Esophagus muscularis mucosa (tissue), 4 donors: ENCODE measurements at regions of chr4 and their contacts with region 1.

Region 1: GRCh38 chr4:107930821-107931774 is at the start of gene CYP2U1:
- DNase-seq: peak; percentile 94
- H3K4me3 ChIP-seq: peak within 1 kb of the TSS; percentile 77 to 93 (median 83)
- H3K27ac ChIP-seq: peak within 1 kb of the TSS; percentile 79 to 90 (median 88)
- H3K4me1 ChIP-seq: peaks cover 11 to 38% (median 31%) of the 10 kb centered on the region in 4 donors
- H3K27me3 ChIP-seq: no peaks in the 10 kb centered on the region
- CTCF ChIP-seq: peak in 2 of 3 experiments; percentile 23 to 44
- EP300 ChIP-seq: no peak
- POLR2A ChIP-seq: peak; percentile 24
- total RNA-seq, gene CYP2U1: 17.7 to 36.6 (median 22.9) TPM

Region 2: DNA sequence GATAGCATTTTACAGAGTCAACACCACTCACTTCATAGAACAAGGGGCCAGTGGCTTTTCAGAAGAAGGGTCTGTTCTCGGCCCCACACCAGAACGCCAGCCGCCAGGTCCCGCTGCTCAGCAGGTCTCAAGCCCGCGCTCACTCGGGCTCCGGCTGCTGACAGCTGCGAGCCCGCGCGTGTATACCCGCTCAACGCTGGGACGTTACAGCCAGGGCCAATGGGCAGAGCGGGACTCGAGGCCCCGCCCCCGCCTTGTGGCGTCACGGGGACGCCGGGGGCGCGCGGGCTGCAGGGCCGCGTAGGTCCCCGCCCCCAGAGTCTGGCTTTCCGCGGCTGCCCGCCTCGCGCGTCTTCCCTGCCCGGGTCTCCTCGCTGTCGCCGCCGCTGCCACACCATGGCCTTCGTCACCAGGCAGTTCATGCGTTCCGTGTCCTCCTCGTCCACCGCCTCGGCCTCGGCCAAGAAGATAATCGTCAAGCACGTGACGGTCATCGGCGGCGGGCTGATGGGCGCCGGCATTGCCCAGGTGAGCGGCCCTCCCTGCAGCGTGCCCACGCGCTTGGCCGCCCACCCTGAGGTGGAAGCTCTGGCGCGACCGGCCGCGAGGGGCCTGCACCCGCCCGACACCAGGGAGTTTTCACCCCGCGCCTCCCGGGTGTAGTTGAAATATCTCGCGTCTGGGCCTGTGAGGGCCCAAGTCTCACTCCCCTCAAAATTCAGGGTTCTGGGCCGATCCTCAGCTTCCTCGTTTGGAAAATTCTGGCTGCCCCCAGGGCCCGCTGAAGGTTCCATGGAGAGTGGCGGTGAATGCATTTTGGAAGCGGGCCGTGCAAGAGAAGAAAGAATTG is 58.7 kb after region 1 on chr4 and contains the start of gene HADH:
- intact Hi-C with region 1: loop called (anchors 5 kb)
- DNase-seq: peak; percentile 98
- H3K4me3 ChIP-seq: peak within 1 kb of the TSS; percentile 78 to 99 (median 88)
- H3K27ac ChIP-seq: peak within 1 kb of the TSS; percentile 92 to 98 (median 95)
- H3K4me1 ChIP-seq: peaks cover 10 to 69% (median 63%) of the 10 kb centered on the region in 4 donors
- H3K27me3 ChIP-seq: no peaks in the 10 kb centered on the region
- CTCF ChIP-seq: no peak
- EP300 ChIP-seq: no peak
- POLR2A ChIP-seq: peak; percentile 86
- total RNA-seq, gene HADH: 60.8 to 176 (median 108) TPM